Thyroid gland (tissue), 4 donors: ENCODE measurements at regions of chr3 and their contacts with region 1.

Region 1: GRCh38 chr3:88005066-88005465 is 53.7 kb downstream of the CGGBP1 start:
- DNase-seq: no peak
- H3K4me3 ChIP-seq: no peak overlapping the region
- H3K27ac ChIP-seq: no peak overlapping the region
- H3K4me1 ChIP-seq: no peaks in the 10 kb centered on the region
- H3K27me3 ChIP-seq: no peaks in the 10 kb centered on the region
- CTCF ChIP-seq: peak in 3 of 6 experiments; percentile 41 to 57 (median 52)
- POLR2A ChIP-seq: no peak

Region 2: GRCh38 chr3:87771341-87772192 is 233.5 kb before region 1 on chr3:
- intact Hi-C with region 1: loop called (anchors 5 kb)
- DNase-seq: peak; percentile 25 to 30
- H3K4me3 ChIP-seq: no peak overlapping the region
- H3K27ac ChIP-seq: no peak overlapping the region
- H3K4me1 ChIP-seq: no peaks in the 10 kb centered on the region
- H3K27me3 ChIP-seq: no peaks in the 10 kb centered on the region
- CTCF ChIP-seq: peak in 5 of 6 experiments; percentile 27 to 69 (median 40)
- POLR2A ChIP-seq: no peak